ENCODE measurements at regions of chr11 and their contacts with region 1.

Region 1: GRCh38 chr11:65354265-65355012 is at the start of gene TIGD3:
- DNase-seq: peak; percentile 98
- total RNA-seq, gene TIGD3: 0.12 and 1.9 TPM in 2 replicates

Region 2: GRCh38 chr11:65524741-65525545 is 170.5 kb after region 1 on chr11 and contains the start of gene SCYL1:
- in situ Hi-C with region 1: loop called (anchors 25 kb)
- DNase-seq: peak; percentile 90
- total RNA-seq, gene SCYL1: 77.6 and 80.4 TPM in 2 replicates

Region 3: GRCh38 chr11:65625628-65626342 is 271.3 kb after region 1 on chr11:
- in situ Hi-C with region 1: no loop called
- DNase-seq: peak; percentile 89